ENCODE measurements at regions of chr2 and their contacts with region 1.

Region 1: DNA sequence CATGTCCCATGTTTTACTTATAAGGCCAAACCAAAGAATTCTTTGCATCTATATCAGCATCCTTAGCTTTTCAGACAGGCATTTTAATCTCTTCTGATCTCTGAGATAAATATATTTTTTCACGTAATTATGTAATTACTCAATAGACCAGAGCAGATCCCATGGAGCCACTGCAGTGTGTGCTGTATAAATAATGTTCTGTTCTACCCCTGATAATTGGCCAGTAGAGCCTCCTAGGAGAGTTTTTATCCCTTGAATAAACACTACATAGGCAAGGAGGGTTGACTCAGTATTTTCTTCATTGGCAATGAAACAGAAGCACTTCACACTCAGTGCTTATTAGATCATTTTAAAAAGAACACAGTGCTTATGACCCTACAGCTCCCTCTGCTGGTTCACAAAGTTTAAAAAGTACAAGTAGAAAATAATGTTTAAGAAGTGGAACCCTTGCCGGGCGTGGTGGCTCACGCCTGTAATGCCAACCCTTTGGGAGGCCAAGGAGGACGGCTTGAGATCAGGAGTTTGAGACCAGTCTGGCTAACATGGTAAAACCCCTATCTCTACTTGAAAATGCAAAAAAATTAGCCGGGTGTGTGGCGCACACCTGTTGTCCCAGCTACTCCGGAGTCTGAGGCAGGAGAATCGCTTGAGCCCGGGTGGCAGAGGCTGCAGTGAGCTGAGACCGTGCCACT is 91.9 kb downstream of the PPP1R1C start:
- DNase-seq: peak; percentile 40
- H3K4me3 ChIP-seq: no peak overlapping the region
- H3K27me3 ChIP-seq: no peaks in the 10 kb centered on the region
- CTCF ChIP-seq: peak; percentile 64

Region 2: GRCh38 chr2:182066400-182067087 is 11.1 kb before region 1 on chr2:
- CTCF ChIA-PET with region 1: interaction called, 22 read pairs
- POLR2A ChIA-PET with region 1: no interaction called
- DNase-seq: peak; percentile 81
- H3K4me3 ChIP-seq: no peak overlapping the region
- H3K27me3 ChIP-seq: no peaks in the 10 kb centered on the region
- CTCF ChIP-seq: no peak

Region 3: DNA sequence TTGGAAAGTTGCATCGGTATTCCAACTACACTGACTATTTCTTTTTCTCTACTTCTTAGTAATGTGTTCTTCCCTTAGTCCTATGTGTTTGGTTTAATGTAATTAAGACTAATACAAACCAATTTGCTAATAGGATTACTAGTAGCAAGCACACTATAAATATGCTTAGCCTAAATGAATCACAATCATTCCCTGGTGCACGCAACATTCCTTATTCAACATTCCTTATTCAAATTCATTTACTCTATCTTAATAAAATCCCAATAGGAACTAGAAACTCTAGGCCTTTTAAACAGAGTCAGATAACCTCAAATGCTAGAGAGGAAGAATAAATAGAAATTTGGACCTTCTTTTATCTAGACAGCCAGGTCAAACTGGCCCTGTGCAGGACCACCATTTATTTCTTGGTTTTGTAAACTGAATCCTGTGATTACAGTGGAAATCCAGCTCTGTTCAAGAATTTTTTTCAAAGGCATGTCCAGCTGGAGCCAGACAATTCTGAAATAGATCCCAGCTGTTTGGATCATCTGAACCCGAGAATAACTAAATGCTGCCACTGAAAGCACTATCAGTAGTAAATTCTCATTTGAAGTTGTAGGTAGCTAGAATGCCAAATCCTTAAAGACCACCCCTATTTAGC is 11.2 kb after region 1 on chr2:
- CTCF ChIA-PET with region 1: interaction called, 16 read pairs
- POLR2A ChIA-PET with region 1: no interaction called
- DNase-seq: no peak
- H3K4me3 ChIP-seq: no peak overlapping the region
- H3K27me3 ChIP-seq: no peaks in the 10 kb centered on the region
- CTCF ChIP-seq: no peak

Region 4: GRCh38 chr2:182220335-182220734 is 142.7 kb after region 1 on chr2:
- CTCF ChIA-PET with region 1: no interaction called
- POLR2A ChIA-PET with region 1: no interaction called
- DNase-seq: no peak
- H3K4me3 ChIP-seq: no peak overlapping the region
- H3K27me3 ChIP-seq: no peaks in the 10 kb centered on the region
- CTCF ChIP-seq: no peak

Region 5: GRCh38 chr2:182330451-182331325 is 253.1 kb after region 1 on chr2:
- CTCF ChIA-PET with region 1: no interaction called
- POLR2A ChIA-PET with region 1: no interaction called
- DNase-seq: no peak
- H3K4me3 ChIP-seq: no peak overlapping the region
- H3K27me3 ChIP-seq: no peaks in the 10 kb centered on the region
- CTCF ChIP-seq: no peak

Region 6: GRCh38 chr2:182807319-182807718 is 729.7 kb after region 1 on chr2:
- CTCF ChIA-PET with region 1: no interaction called
- POLR2A ChIA-PET with region 1: no interaction called
- DNase-seq: no peak
- H3K4me3 ChIP-seq: no peak overlapping the region
- H3K27me3 ChIP-seq: peaks cover 3% of the 10 kb centered on the region
- CTCF ChIP-seq: no peak

Measured in BJ (cell line).